ENCODE measurements at regions of chr10 and their contacts with region 1.

Region 1: GRCh38 chr10:32149252-32149955 is 93.2 kb upstream of the KIF5B start:
- DNase-seq: peak; percentile 19 to 93
- H3K4me3 ChIP-seq: peak overlapping the region; percentile 27 to 40
- H3K27ac ChIP-seq: peak overlapping the region; percentile 81 to 91
- H3K4me1 ChIP-seq: peaks cover 0 to 18% of the 10 kb centered on the region in 2 donors
- H3K27me3 ChIP-seq: no peaks in the 10 kb centered on the region
- CTCF ChIP-seq: no peak

Region 2: DNA sequence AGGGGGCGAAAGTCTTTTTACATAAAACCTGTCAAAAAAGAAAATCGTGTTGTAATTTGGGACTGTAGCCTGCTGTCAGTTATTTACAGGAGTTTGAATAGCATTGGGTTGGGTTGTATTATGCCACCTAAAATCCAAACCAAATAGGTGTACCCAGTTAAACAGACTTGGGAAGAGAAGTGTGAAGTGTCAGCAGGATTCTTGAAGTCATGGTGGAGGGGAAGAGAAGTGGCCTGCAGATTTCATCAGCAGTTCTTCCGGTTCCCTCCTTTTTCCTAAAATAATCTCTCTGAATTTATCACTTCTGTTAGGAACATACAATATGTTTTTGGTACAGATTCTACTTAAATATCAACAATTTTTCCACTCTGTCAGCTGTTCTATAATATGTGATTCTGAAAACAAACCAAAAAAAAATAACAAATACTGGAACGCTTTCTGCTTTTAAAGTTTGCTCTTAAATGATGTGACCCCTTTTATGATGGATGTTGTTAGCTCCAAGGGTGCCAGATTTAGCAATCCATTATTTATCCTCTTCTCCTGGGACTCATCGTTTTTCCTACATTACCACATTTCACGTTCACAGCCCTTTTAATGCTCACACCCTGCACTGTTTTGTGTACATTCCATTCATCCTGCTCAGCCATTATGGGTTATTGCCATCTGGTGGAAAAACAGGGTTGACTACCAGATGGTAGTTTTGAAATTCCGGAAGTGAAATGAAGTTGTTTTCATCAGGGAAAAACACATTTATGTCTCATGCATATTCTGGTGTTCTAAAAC is 202.1 kb before region 1 on chr10:
- intact Hi-C with region 1: loop called (anchors 5 kb)
- DNase-seq: no peak
- H3K4me3 ChIP-seq: peak overlapping the region in 1 of 2 donors; percentile 41
- H3K27ac ChIP-seq: peak overlapping the region; percentile 28 to 60
- H3K4me1 ChIP-seq: peaks cover 0 to 13% of the 10 kb centered on the region in 2 donors
- H3K27me3 ChIP-seq: no peaks in the 10 kb centered on the region
- CTCF ChIP-seq: peak; percentile 29 to 57 (median 30)

Region 3: GRCh38 chr10:32112055-32112454 is 37.3 kb before region 1 on chr10:
- intact Hi-C with region 1: loop called (anchors 5 kb)
- DNase-seq: no peak
- H3K4me3 ChIP-seq: no peak overlapping the region
- H3K27ac ChIP-seq: peak overlapping the region; percentile 6 to 66
- H3K4me1 ChIP-seq: peaks cover 0 to 14% of the 10 kb centered on the region in 2 donors
- H3K27me3 ChIP-seq: no peaks in the 10 kb centered on the region
- CTCF ChIP-seq: no peak

Measured in ascending aorta (tissue), 2 donors.